Activated B cell treated with CpG ODN at 0.5 μM for 24 hours (primary cell): ENCODE measurements at regions of chr10 and their contacts with region 1.

Region 1: DNA sequence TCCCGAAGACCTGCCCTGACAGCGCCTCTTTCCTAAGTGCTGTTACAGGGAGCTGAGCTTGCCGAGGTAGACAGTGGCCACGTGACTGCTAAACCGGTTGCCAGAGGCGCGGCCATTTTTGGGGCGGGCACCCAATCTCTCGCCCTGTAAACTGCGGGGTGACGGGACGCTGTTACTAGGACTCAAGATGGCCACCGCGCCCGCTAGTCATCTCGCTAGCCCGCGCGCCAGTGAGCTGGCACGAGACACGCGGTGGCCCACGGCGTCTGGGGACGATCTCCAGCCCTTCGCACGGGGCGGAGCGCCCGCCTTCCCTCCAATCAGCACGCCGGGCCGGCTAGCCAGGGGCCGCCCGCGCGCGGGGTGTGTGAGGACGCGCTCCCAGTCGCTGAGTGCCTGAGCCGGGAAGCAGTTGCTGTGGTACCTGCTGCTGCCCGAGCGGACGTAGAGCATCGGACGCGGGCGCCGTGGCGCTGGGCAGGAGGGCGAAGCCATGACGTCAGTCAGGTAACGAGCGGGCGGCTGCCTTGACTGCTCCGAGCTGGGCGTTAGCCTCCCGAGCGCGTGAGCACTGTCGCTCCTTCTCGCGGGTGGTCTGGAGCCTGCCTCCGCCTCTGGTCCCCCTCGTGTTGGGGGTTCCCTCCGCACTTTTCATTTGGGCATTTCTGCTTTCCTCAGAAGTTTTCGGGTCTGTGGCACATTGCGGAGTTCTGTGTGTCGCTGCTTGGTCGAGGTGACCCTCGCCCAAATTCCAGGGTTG is 25.5 kb downstream of the ADK start:
- DNase-seq: peak; percentile 92
- ATAC-seq: peak; percentile 90
- H3K4me3 Mint-ChIP-seq: peak overlapping the region; percentile 92
- H3K27ac Mint-ChIP-seq: peak overlapping the region; percentile 97
- H3K4me1 Mint-ChIP-seq: peaks cover 55% of the 10 kb centered on the region
- H3K27me3 Mint-ChIP-seq: no peaks in the 10 kb centered on the region
- CTCF ChIP-seq: no peak

Region 2: DNA sequence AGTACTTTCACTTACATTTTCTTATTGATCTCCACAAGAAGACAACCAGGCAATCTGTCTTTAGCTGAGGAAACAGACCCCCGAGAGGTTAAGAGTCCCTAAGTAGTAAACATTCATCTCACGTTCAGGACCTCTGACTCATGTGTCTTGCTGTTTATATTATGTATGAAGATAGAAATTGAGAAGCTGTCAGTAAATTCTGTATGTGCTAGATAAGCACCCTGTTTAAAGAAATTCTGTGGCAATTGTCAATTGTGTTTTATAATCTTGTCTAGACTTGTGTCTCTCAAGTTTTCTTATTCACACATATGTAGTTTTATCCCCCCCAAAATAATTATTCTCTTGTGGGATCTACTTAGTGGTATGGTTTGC is 11.0 kb before region 1 on chr10:
- CTCF ChIA-PET with region 1: interaction called, 6 read pairs
- POLR2A ChIA-PET with region 1: interaction called, 61 read pairs
- intact Hi-C with region 1: loop called (anchors 1 kb)
- DNase-seq: no peak
- ATAC-seq: no peak
- H3K4me3 Mint-ChIP-seq: peak overlapping the region; percentile 24
- H3K27ac Mint-ChIP-seq: peak overlapping the region; percentile 83
- H3K4me1 Mint-ChIP-seq: peaks cover 81% of the 10 kb centered on the region
- H3K27me3 Mint-ChIP-seq: no peaks in the 10 kb centered on the region
- CTCF ChIP-seq: no peak

Region 3: GRCh38 chr10:74213571-74214162 is 37.1 kb after region 1 on chr10:
- CTCF ChIA-PET with region 1: interaction called, 3 read pairs
- POLR2A ChIA-PET with region 1: interaction called, 12 read pairs
- intact Hi-C with region 1: loop called (anchors 1 kb)
- DNase-seq: no peak
- ATAC-seq: peak; percentile 77
- H3K4me3 Mint-ChIP-seq: no peak overlapping the region
- H3K27ac Mint-ChIP-seq: peak overlapping the region; percentile 67
- H3K4me1 Mint-ChIP-seq: peaks cover 31% of the 10 kb centered on the region
- H3K27me3 Mint-ChIP-seq: no peaks in the 10 kb centered on the region
- CTCF ChIP-seq: no peak

Region 4: GRCh38 chr10:74262856-74263255 is 86.3 kb after region 1 on chr10:
- CTCF ChIA-PET with region 1: no interaction called
- POLR2A ChIA-PET with region 1: no interaction called
- intact Hi-C with region 1: no loop called
- DNase-seq: no peak
- ATAC-seq: no peak
- H3K4me3 Mint-ChIP-seq: no peak overlapping the region
- H3K27ac Mint-ChIP-seq: no peak overlapping the region
- H3K4me1 Mint-ChIP-seq: peaks cover 15% of the 10 kb centered on the region
- H3K27me3 Mint-ChIP-seq: no peaks in the 10 kb centered on the region
- CTCF ChIP-seq: no peak

Region 5: GRCh38 chr10:74718208-74718607 is 541.6 kb after region 1 on chr10:
- CTCF ChIA-PET with region 1: no interaction called
- POLR2A ChIA-PET with region 1: no interaction called
- intact Hi-C with region 1: no loop called
- DNase-seq: no peak
- ATAC-seq: no peak
- H3K4me3 Mint-ChIP-seq: no peak overlapping the region
- H3K27ac Mint-ChIP-seq: no peak overlapping the region
- H3K4me1 Mint-ChIP-seq: no peaks in the 10 kb centered on the region
- H3K27me3 Mint-ChIP-seq: no peaks in the 10 kb centered on the region
- CTCF ChIP-seq: no peak

Region 6: GRCh38 chr10:75210282-75211006 is 1033.9 kb after region 1 on chr10 and contains the start of gene VDAC2:
- CTCF ChIA-PET with region 1: no interaction called
- POLR2A ChIA-PET with region 1: interaction called, 3 read pairs
- intact Hi-C with region 1: loop called (anchors 2 kb)
- DNase-seq: peak; percentile 98
- ATAC-seq: peak; percentile 89
- H3K4me3 Mint-ChIP-seq: peak within 1 kb of the TSS; percentile 99
- H3K27ac Mint-ChIP-seq: peak within 1 kb of the TSS; percentile 100
- H3K4me1 Mint-ChIP-seq: peaks cover 27% of the 10 kb centered on the region
- H3K27me3 Mint-ChIP-seq: no peaks in the 10 kb centered on the region
- CTCF ChIP-seq: no peak
- total RNA-seq, gene VDAC2: 99.0 and 104 TPM in 2 replicates